Caco-2 (cell line): ENCODE measurements at regions of chr1 and their contacts with region 1.

Region 1: DNA sequence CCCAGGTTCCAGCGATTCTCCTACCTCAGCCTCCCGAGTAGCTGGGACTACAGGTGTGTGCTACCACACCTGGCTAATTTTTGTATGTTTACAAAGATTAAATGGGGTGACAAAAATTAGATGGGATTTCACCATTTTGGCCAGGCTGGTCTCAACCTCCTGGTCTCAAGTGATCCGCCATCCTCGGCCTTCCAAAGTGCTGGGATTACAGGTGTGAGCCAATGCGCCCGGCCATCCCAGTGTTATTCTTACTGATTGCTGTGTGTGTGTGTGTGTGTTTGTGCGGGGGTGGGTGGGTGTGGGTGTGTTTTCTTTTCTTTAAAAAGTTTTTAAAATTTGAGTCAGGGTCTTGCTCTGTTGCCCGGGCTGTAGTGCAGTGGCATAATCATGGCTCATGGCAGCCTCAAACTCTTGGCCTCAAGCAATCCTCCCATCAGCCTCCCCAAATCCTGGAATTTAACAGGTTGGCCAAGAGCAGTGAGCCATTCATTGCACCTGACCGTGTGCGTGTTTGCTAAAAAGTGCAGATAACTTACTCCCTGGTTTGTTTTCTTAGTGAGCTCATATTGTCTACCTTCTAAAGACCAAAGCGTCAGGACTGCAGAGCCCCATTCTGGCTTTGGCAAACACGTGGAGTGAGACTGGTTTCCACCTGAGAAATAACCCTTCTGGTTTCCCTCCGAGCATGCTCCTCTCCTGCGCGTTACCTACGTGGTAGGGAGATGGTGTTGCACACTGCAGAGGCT is 32.4 kb upstream of the CA6 start:
- DNase-seq: peak; percentile 40 to 44
- H3K4me3 ChIP-seq: no peak overlapping the region
- H3K4me3 Mint-ChIP-seq: no peak overlapping the region
- H3K27ac Mint-ChIP-seq: peak overlapping the region; percentile 35
- H3K4me1 ChIP-seq: 0 out of 2 replicates have a peak, but pooled peaks cover 11% of the 10 kb centered on the region
- H3K4me1 Mint-ChIP-seq: peaks cover 4% of the 10 kb centered on the region
- H3K27me3 ChIP-seq: no peaks in the 10 kb centered on the region
- H3K27me3 Mint-ChIP-seq: no peaks in the 10 kb centered on the region
- CTCF ChIP-seq: no peak

Region 2: DNA sequence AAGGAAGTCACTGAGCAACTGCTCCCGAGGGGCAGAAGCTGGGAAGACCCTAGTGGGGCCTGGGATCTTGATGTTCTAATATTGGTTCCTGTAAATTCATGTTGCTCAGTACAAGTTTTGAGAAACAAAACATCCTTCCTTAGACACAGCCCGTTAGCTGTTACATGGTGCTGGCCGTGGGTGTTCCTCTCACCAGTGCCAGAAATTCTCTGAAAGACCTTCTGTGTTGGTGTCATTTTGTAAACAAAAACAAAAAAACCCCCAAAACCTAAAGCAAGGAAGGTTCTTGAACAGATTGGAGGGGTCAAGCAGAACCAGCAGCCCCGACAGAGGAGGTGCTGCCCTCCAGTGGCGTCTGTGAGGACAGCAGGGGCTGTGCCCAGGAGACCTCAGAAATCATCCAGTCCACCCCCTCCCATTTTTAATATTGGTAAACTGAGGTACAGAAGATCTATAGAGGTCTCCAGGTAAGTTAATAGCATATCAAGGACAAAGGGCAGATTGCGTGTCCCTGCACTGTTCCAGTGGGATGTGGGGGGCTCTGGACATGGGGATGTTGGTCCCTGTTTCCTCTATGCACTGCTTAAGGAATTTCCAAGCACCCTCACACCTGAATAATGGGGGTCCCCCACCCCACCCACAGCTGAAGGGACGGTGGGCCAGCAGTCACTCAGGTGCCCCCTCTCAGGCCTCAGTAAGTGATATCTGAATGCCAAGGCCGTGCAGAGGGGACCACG is 74.8 kb after region 1 on chr1:
- CTCF ChIA-PET with region 1: interaction called, 4 read pairs
- POLR2A ChIA-PET with region 1: no interaction called
- intact Hi-C with region 1: loop called (anchors 5 kb)
- DNase-seq: peak in 1 of 2 experiments; percentile 70
- H3K4me3 ChIP-seq: no peak overlapping the region
- H3K4me3 Mint-ChIP-seq: no peak overlapping the region
- H3K27ac Mint-ChIP-seq: no peak overlapping the region
- H3K4me1 ChIP-seq: no peaks in the 10 kb centered on the region
- H3K4me1 Mint-ChIP-seq: peaks cover 10% of the 10 kb centered on the region
- H3K27me3 ChIP-seq: no peaks in the 10 kb centered on the region
- H3K27me3 Mint-ChIP-seq: no peaks in the 10 kb centered on the region
- CTCF ChIP-seq: peak; percentile 79 to 81

Region 3: GRCh38 chr1:9004700-9005394 is 91.6 kb after region 1 on chr1:
- CTCF ChIA-PET with region 1: interaction called, 16 read pairs
- POLR2A ChIA-PET with region 1: no interaction called
- intact Hi-C with region 1: loop called (anchors 1 kb)
- DNase-seq: peak; percentile 69 to 80
- H3K4me3 ChIP-seq: no peak overlapping the region
- H3K4me3 Mint-ChIP-seq: no peak overlapping the region
- H3K27ac Mint-ChIP-seq: no peak overlapping the region
- H3K4me1 ChIP-seq: peaks cover 46% of the 10 kb centered on the region
- H3K4me1 Mint-ChIP-seq: peaks cover 19% of the 10 kb centered on the region
- H3K27me3 ChIP-seq: no peaks in the 10 kb centered on the region
- H3K27me3 Mint-ChIP-seq: no peaks in the 10 kb centered on the region
- CTCF ChIP-seq: peak; percentile 79 to 83

Region 4: DNA sequence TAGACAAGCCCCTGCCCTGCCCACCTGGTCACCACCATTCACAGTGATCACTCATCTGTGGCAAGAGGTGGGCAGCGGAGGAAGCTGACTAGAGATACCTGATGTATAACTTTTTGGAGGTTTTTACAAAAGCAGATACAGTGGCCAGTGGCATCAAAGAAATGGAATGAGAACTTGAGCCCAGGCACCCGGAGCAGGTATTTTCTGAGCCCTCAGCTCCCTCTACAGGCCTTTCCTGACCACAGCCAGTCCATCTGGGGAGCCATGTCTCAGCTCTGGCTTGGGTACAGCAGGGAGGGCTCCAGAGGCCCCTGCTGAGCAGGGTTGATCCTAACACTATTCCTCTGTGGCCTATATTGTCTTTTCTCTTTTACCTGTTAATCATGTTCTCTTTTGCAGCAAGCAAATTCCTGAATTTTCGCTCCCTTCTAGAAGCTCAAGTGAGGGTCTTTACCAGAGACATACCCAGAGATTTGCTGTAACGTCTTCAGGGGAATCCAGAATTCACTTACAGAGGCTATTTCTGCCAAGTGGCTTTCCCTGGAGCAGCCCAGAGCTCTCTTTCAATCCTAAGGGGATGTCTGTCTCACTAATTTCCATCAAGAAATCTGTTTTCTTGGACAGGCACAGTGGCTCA is 188.3 kb after region 1 on chr1:
- CTCF ChIA-PET with region 1: interaction called, 9 read pairs
- POLR2A ChIA-PET with region 1: no interaction called
- intact Hi-C with region 1: loop called (anchors 1 kb)
- DNase-seq: peak; percentile 63 to 65
- H3K4me3 ChIP-seq: no peak overlapping the region
- H3K4me3 Mint-ChIP-seq: no peak overlapping the region
- H3K27ac Mint-ChIP-seq: no peak overlapping the region
- H3K4me1 ChIP-seq: no peaks in the 10 kb centered on the region
- H3K4me1 Mint-ChIP-seq: no peaks in the 10 kb centered on the region
- H3K27me3 ChIP-seq: no peaks in the 10 kb centered on the region
- H3K27me3 Mint-ChIP-seq: no peaks in the 10 kb centered on the region
- CTCF ChIP-seq: peak; percentile 44 to 78